ENCODE measurements at regions of chr7 and their contacts with region 1.

Region 1: GRCh38 chr7:30322271-30323005 is 38.0 kb downstream of the ZNRF2 start:
- DNase-seq: peak; percentile 16
- H3K4me3 Mint-ChIP-seq: peak overlapping the region; percentile 70
- H3K27ac Mint-ChIP-seq: peak overlapping the region; percentile 92
- H3K4me1 Mint-ChIP-seq: peaks cover 54% of the 10 kb centered on the region
- H3K27me3 Mint-ChIP-seq: no peaks in the 10 kb centered on the region

Region 2: GRCh38 chr7:30255064-30255769 is 67.2 kb before region 1 on chr7:
- intact Hi-C with region 1: no loop called
- DNase-seq: no peak
- H3K4me3 Mint-ChIP-seq: no peak overlapping the region
- H3K27ac Mint-ChIP-seq: no peak overlapping the region
- H3K4me1 Mint-ChIP-seq: peaks cover 7% of the 10 kb centered on the region
- H3K27me3 Mint-ChIP-seq: no peaks in the 10 kb centered on the region

Region 3: DNA sequence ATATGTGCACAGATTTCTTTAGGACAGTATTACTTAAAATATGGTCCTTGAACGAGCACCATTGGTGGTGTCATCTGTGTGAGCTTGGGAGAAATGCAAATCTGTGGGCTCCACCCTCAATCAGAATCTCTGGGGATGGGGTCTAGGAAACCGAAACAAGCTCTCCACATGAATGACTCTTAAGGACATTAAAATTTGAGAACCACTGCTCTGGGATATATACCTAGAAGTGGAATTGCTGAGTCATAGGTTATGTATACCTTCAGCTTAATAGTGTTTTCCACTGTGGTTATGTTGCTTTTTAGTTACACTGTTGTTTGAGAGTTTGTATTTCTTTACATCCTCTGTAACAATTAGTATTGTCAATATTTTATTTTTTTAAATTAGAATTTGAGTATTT is 14.0 kb before region 1 on chr7:
- intact Hi-C with region 1: loop called (anchors 2 kb)
- DNase-seq: no peak
- H3K4me3 Mint-ChIP-seq: no peak overlapping the region
- H3K27ac Mint-ChIP-seq: no peak overlapping the region
- H3K4me1 Mint-ChIP-seq: peaks cover 31% of the 10 kb centered on the region
- H3K27me3 Mint-ChIP-seq: no peaks in the 10 kb centered on the region